ENCODE measurements at regions of chr1 and their contacts with region 1.

Region 1: DNA sequence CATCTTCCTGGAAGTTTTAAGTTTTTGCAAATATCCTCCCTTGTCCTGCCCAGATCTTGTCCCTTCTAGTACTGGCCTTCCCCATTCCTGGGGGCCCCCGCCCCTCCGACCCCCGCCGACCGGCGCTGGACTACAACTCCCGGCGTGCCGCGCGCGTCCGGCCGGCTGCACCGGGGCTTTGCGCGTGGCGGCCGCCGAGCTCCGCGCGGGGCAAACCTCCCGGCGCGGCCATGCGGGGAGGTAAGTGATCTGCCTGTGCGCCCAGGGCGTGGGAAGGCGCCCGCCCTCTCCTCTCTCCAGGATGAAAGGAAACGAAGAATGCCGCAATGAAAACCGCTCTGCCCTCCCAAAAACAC is 3.2 kb upstream of the SAMD13 start:
- DNase-seq: peak; percentile 73
- H3K4me3 ChIP-seq: peak overlapping the region; percentile 94
- H3K27ac ChIP-seq: peak overlapping the region; percentile 57
- H3K4me1 ChIP-seq: peaks cover 50% of the 10 kb centered on the region
- CTCF ChIP-seq: no peak

Region 2: GRCh38 chr1:83761167-83762038 is 536.9 kb before region 1 on chr1:
- CTCF ChIA-PET with region 1: no interaction called
- POLR2A ChIA-PET with region 1: interaction called, 3 read pairs
- intact Hi-C with region 1: loop called (anchors 5 kb)
- DNase-seq: peak; percentile 96
- H3K4me3 ChIP-seq: peak overlapping the region; percentile 63
- H3K27ac ChIP-seq: peak overlapping the region; percentile 96
- H3K4me1 ChIP-seq: peaks cover 69% of the 10 kb centered on the region
- CTCF ChIP-seq: peak; percentile 31

Region 3: DNA sequence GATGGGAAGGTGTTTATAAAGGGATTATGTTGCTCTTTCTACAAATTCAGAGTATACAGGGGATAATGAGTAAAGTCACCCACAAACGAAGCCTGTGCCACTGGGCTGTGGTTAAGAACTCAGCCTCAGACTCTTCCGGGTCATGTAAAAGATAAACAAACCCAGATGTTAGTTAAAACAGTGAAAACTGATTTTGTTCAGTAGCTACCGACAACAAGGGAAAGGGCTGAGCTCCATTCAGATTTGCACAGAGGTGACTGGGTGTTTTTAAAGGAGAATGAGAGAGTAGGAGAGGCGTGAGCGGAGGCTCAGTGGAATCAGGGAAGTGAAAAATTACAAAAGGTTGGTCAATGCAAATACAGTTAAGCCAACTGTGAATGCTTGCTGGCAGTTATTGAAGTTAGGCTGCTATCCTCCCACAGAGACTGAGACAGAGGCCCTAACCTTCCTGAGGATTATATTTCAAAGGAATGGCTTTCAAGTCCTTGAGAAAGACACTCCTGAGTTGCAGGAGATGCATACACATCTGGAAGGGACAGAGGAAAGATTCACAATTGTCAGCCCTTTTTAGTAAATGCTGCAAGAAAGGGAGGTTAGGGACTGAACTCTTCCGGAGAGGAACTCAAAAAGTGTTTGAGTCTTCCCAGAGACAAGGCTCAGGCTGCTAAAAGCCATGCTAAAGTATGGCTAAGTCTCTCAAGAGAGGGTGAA is 26.7 kb before region 1 on chr1:
- CTCF ChIA-PET with region 1: no interaction called
- POLR2A ChIA-PET with region 1: interaction called, 16 read pairs
- intact Hi-C with region 1: loop called (anchors 1 kb)
- DNase-seq: peak; percentile 85
- H3K4me3 ChIP-seq: peak overlapping the region; percentile 57
- H3K27ac ChIP-seq: peak overlapping the region; percentile 90
- H3K4me1 ChIP-seq: peaks cover 30% of the 10 kb centered on the region
- CTCF ChIP-seq: no peak

Region 4: DNA sequence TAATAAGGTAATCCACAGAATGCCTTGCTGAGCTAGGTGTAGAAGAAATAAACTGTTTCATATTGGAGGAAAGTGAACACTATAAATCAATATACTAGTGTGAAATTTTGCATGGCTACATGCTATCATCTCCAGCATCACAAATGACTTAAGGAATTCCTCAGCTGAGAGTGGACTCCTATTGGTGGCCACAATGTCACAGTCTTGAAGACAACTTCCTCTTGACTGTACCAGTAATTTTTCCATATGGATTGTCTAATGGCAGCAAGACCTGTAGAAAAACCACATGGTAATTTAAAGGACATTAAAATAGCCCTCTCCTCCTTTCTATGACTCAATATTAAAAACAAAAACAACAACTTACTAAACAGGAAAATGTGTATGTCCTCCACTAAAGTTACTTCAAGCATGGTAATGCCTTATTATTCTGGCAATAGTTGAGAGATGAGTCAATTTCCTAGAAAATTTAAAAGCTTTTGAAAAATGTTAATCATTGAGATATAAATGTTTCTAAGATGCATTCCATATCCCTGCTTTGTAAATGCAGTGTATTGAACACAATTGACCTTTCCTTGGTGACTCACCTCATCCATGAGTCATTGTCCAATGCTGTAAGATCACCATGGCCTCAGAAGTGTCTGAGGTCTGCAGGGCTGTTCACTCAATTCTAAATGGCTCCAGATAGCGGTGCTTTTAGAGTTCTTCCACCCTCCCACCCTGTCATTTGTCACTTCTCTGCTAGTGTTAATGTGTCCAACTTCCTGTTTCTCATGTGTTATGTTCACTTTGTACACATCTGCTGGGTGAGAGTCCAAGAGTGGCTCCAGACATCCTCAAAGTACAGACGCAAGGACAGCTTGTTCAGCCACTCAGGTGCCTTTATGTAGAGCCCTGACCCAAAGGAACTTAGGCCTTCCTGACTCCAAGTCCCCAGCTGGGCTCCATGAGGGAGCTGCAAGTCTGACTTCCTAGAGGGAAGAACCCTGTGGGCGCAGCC is 67.2 kb after region 1 on chr1:
- CTCF ChIA-PET with region 1: no interaction called
- POLR2A ChIA-PET with region 1: no interaction called
- intact Hi-C with region 1: no loop called
- DNase-seq: peak; percentile 15
- H3K4me3 ChIP-seq: no peak overlapping the region
- H3K27ac ChIP-seq: no peak overlapping the region
- H3K4me1 ChIP-seq: no peaks in the 10 kb centered on the region
- CTCF ChIP-seq: no peak

Region 5: GRCh38 chr1:84433258-84434080 is 135.2 kb after region 1 on chr1:
- CTCF ChIA-PET with region 1: no interaction called
- POLR2A ChIA-PET with region 1: interaction called, 3 read pairs
- intact Hi-C with region 1: loop called (anchors 5 kb)
- DNase-seq: peak; percentile 76
- H3K4me3 ChIP-seq: peak overlapping the region; percentile 52
- H3K27ac ChIP-seq: no peak overlapping the region
- H3K4me1 ChIP-seq: peaks cover 26% of the 10 kb centered on the region
- CTCF ChIP-seq: peak; percentile 95

Region 6: GRCh38 chr1:84573967-84574842 is 275.9 kb after region 1 on chr1 and contains the start of gene CTBS:
- CTCF ChIA-PET with region 1: no interaction called
- POLR2A ChIA-PET with region 1: interaction called, 6 read pairs
- intact Hi-C with region 1: loop called (anchors 2 kb)
- DNase-seq: peak; percentile 95
- H3K4me3 ChIP-seq: peak within 1 kb of the TSS; percentile 72
- H3K27ac ChIP-seq: peak within 1 kb of the TSS; percentile 81
- H3K4me1 ChIP-seq: peaks cover 20% of the 10 kb centered on the region
- CTCF ChIP-seq: no peak
- total RNA-seq, gene CTBS: 4.5 and 5.9 TPM in 2 replicates

Region 7: DNA sequence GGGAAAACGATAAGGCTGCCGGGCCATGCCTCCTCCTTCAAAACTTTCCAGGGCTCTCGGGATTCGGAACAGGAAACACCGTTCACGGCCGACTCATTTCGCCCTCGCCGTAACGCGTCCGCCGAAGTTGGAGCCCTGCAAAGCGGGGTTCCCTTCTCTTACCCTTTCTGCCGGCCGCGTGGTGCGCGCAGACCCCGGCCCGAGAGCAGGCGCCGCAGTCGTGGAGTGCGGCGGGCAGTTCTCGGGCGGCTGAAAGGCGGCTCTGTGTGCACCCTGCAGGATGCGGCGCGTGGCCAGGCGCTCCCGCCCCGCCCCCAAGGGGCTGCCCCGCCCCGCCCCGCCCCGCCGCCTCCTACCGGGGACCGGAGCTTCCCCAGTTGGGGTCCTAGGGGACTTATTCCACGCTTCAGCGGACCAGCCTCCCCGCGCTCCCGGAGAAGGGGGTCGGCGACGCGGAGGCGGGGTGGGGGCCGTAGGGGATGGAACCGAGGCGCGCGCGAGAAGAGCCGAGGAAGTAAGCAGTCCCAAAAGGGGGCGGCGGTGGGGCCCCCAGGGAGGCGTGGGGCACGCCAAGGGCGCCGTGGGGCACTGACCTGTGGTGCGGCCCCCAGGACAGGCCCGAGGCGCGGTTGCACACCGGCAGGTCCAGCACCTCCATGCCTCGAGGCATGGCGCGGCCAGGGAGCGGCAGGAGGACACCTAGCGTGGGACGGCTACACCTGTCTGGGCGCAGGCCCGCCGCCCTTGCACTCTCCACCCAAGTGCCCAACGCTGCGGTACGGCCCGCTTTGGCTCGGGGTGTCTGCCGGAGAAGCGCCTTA is 698.8 kb after region 1 on chr1 and contains the start of gene MCOLN2:
- CTCF ChIA-PET with region 1: no interaction called
- POLR2A ChIA-PET with region 1: interaction called, 3 read pairs
- intact Hi-C with region 1: loop called (anchors 10 kb)
- DNase-seq: peak; percentile 80
- H3K4me3 ChIP-seq: peak within 1 kb of the TSS; percentile 83
- H3K27ac ChIP-seq: peak within 1 kb of the TSS; percentile 92
- H3K4me1 ChIP-seq: peaks cover 54% of the 10 kb centered on the region
- CTCF ChIP-seq: no peak
- total RNA-seq, gene MCOLN2: 188 and 262 TPM in 2 replicates

Measured in OCI-LY7 (cell line).